Aorta (tissue), 5 donors: ENCODE measurements at regions of chr9 and their contacts with region 1.

Region 1: GRCh38 chr9:131046581-131047202 is 37.7 kb downstream of the LAMC3 start:
- DNase-seq: peak; percentile 67 to 91
- ATAC-seq: peak; percentile 89
- H3K4me3 ChIP-seq: no peak overlapping the region
- H3K27ac ChIP-seq: no peak overlapping the region
- H3K4me1 ChIP-seq: no peaks in the 10 kb centered on the region
- H3K27me3 ChIP-seq: no peaks in the 10 kb centered on the region

Region 2: DNA sequence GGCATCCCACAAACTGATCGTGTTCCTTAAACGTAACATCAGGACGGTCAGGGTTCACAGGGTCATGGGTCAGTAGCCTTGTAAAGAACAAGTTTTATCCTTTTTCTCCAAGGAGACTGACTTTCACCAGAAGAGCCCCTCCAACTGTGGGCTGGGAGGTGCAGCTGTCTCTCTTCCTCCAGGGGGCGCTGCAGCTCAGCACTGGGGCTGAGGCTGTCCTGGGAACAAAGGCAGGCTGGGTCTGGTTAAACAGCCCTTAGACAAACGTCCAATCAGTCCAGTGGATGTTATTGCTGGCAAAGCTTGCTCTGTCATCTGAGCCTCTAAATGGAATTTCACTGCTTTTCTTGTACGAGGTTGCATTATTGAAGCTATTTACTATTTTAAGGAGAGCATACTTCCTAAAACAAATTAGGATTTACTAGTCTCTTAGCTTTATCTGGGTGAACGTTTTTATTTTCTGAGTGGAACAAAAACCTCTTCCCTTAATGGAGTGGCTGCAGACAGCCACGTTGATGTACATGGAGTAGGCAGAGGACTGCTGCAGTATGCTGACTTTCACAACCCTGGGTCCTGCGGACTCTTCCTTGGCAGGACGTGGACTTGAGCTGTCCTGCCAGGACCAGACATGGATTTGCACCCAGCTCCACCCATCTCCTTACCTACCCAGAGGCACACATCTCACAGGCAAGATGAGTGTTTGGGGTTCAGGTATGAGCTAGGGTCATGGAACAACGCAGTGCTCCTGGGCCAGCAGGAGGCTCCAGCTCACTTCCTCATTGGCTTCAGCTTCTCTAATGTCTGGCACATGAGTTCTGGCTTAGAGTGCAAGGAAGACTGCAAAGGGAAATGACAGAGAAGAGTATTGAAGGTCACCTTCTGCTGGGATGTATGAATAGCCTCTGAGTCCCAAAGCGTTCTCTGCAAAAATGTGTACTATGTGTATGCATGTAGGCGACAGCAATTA is 345.4 kb before region 1 on chr9:
- intact Hi-C with region 1: loop called (anchors 5 to 10 kb)
- DNase-seq: peak; percentile 87 to 92
- ATAC-seq: peak; percentile 94
- H3K4me3 ChIP-seq: no peak overlapping the region
- H3K27ac ChIP-seq: peak overlapping the region in 1 of 2 donors; percentile 11
- H3K4me1 ChIP-seq: no peaks in the 10 kb centered on the region
- H3K27me3 ChIP-seq: no peaks in the 10 kb centered on the region

Region 3: DNA sequence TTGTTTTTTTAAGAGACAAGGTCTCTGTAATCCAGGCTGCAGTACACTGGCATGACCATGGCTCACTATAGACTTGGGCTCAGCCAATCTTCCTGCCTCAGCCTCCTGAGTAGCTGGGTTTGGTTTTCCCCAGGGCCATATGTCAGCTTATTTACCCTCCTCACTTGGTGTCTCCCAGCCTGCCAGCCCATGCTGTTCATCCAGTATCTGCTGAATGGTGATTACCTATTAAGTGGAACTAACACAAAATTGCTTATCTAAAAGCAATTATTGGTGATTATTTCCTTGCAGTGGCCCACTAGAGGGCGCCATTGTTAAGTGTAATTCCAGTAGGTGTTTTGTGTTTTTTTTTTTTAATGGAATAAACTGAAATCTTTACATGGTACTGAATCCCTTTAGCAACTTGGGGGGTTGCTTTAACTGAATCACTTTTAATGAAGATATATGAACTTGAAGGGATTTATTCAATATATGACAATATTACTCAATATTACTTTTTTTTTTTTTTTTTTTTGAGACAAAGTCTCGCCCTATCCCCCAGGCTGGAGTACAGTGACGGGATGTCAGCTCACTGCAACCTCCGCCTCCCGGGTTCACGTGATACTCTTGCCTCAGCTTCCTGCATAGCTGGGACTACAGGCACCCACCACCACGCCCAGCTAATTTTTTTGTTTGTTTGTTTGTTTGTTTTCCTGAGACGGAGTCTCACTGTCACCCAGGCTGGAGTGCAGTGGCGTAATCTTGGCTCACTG is 339.3 kb before region 1 on chr9:
- intact Hi-C with region 1: loop called (anchors 5 to 10 kb)
- DNase-seq: peak; percentile 71 to 83
- ATAC-seq: no peak
- H3K4me3 ChIP-seq: no peak overlapping the region
- H3K27ac ChIP-seq: no peak overlapping the region
- H3K4me1 ChIP-seq: no peaks in the 10 kb centered on the region
- H3K27me3 ChIP-seq: no peaks in the 10 kb centered on the region

Region 4: DNA sequence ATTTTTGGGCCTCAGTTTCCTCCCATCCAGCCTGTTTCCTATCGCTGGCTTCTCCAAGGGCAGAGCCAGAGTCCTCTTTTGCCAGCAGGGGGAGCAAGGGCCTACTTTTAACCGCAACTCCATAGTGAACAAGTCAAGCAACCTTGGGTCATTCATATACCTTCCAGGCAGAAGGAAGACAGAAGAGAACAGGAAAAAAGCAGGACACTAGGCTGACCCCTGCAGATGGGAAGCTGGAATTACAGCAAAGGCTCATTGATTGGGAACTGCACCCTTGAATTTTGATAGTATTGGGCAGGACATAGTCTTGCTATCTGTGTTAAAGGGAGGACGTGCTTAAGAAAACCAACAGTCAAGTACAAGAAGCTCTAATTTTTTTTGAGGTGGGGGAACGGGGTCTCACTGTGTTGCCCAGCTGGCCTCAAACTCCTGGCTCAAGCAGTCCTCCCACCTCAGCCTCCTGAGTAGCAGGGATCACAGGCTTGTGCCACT is 180.2 kb before region 1 on chr9:
- intact Hi-C with region 1: loop called in 1 of 2 experiments (anchors 5 kb)
- DNase-seq: peak; percentile 76 to 82
- ATAC-seq: peak; percentile 54
- H3K4me3 ChIP-seq: no peak overlapping the region
- H3K27ac ChIP-seq: no peak overlapping the region
- H3K4me1 ChIP-seq: no peaks in the 10 kb centered on the region
- H3K27me3 ChIP-seq: no peaks in the 10 kb centered on the region

Region 5: GRCh38 chr9:130997925-130998596 is 48.6 kb before region 1 on chr9:
- intact Hi-C with region 1: no loop called
- DNase-seq: peak; percentile 74 to 91
- ATAC-seq: peak; percentile 52
- H3K4me3 ChIP-seq: no peak overlapping the region
- H3K27ac ChIP-seq: no peak overlapping the region
- H3K4me1 ChIP-seq: no peaks in the 10 kb centered on the region
- H3K27me3 ChIP-seq: no peaks in the 10 kb centered on the region

Region 6: GRCh38 chr9:131008909-131009618 is 37.6 kb before region 1 on chr9 and contains the start of gene LAMC3:
- intact Hi-C with region 1: loop called (anchors 1 to 5 kb)
- DNase-seq: no peak
- ATAC-seq: peak; percentile 45
- H3K4me3 ChIP-seq: peak within 1 kb of the TSS; percentile 2 to 13
- H3K27ac ChIP-seq: no peak within 1 kb of the TSS
- H3K4me1 ChIP-seq: no peaks in the 10 kb centered on the region
- H3K27me3 ChIP-seq: no peaks in the 10 kb centered on the region
- total RNA-seq, gene LAMC3: 0.32 to 0.39 TPM

Region 7: GRCh38 chr9:131107760-131108159 is 61.1 kb after region 1 on chr9:
- intact Hi-C with region 1: no loop called
- DNase-seq: peak in 1 of 2 donors; percentile 75
- ATAC-seq: no peak
- H3K4me3 ChIP-seq: no peak overlapping the region
- H3K27ac ChIP-seq: no peak overlapping the region
- H3K4me1 ChIP-seq: no peaks in the 10 kb centered on the region
- H3K27me3 ChIP-seq: no peaks in the 10 kb centered on the region